T-cell (primary cell): ENCODE measurements at regions of chr5 and their contacts with region 1.

Region 1: DNA sequence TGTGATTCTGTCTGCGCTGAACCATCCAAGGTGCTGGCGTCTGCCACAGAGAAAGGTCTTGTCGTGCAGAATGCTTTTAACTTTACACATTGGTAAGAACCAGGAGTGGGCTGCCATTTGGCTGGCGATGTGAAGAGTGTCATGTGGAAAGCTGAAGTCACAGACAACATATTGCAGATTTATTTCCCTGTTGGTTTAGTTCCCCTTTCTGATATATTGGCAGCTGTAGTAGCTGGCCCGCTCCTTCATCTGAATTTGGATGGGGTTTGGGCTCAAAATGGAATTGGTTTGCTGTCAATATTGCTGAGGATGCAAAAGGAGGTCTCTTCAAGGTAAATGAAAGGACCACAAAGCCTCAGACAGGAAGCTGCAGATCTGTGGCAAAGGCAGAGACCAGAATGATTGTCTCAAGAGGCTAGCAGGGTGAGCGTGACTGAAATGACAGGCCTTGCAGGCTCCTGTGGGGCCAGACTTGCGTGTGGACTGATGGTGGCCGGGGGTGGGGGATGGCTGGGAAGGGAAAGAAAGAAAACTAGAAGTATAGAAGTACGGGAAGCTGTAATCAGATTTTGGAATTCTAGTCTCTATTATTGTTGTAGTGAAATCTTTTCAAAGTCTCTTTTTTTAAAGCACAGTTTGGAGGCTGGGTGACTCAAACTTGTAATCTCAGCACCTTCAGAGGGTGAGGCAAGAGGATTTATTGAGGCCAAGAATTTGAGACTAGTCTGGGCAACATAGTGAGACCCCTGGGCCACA is 25.1 kb upstream of the CD180 start:
- DNase-seq: peak in 24 of 35 experiments; percentile 8 to 69 (median 28)
- ATAC-seq: peak; percentile 93 to 96 (median 94)
- H3K4me3 ChIP-seq: no peak overlapping the region
- H3K4me3 Mint-ChIP-seq: peak overlapping the region; percentile 42 to 74 (median 54)
- H3K27ac ChIP-seq: peak overlapping the region; percentile 70
- H3K27ac Mint-ChIP-seq: peak overlapping the region; percentile 94 to 95
- H3K4me1 ChIP-seq: peaks cover 21 to 35% of the 10 kb centered on the region in 2 experiments
- H3K4me1 Mint-ChIP-seq: peaks cover 58 to 74% (median 70%) of the 10 kb centered on the region in 3 donors
- H3K27me3 ChIP-seq: no peaks in the 10 kb centered on the region
- H3K27me3 Mint-ChIP-seq: no peaks in the 10 kb centered on the region

Region 2: DNA sequence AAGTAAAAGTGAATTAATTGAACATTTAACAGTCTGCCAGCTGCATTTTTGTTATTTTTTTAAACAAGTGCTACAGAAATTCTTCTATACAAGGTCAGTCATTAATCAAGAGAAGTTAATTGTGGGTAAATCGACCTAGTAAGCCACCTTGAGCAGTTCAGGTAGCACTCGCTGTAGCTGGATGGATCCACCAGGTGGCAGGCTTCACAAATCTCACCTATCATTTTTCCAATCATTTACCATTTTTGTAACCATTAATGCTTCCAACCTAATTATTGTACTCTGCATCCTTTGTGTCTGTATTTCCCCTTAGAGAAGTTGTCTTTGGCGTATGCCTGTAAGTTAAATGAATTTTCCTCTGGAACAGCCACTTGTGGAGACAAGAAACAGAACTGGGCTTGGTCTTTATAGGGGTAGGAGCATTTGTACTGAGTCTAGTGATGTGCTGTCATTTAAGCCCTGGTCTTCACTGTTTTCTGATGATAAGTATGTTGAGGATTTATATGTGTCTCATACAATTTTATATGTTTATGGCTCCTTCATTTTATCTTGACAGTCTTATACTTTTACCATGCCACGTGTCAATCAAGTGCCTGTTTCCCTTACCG is 64.6 kb before region 1 on chr5:
- CTCF ChIA-PET with region 1: interaction called in 1 of 2 experiments, 12 read pairs
- POLR2A ChIA-PET with region 1: no interaction called
- DNase-seq: peak in 32 of 35 experiments; percentile 13 to 78 (median 47)
- ATAC-seq: peak in 3 of 4 experiments; percentile 33 to 61 (median 44)
- H3K4me3 ChIP-seq: no peak overlapping the region
- H3K4me3 Mint-ChIP-seq: peak overlapping the region in 1 of 3 donors; percentile 67
- H3K27ac ChIP-seq: peak overlapping the region; percentile 12
- H3K27ac Mint-ChIP-seq: peak overlapping the region; percentile 84 to 87
- H3K4me1 ChIP-seq: peaks cover 28 to 30% of the 10 kb centered on the region in 2 experiments
- H3K4me1 Mint-ChIP-seq: peaks cover 52 to 58% (median 54%) of the 10 kb centered on the region in 3 donors
- H3K27me3 ChIP-seq: no peaks in the 10 kb centered on the region
- H3K27me3 Mint-ChIP-seq: no peaks in the 10 kb centered on the region

Region 3: GRCh38 chr5:67196537-67197059 is 25.1 kb before region 1 on chr5 and contains the start of gene CD180:
- CTCF ChIA-PET with region 1: no interaction called
- POLR2A ChIA-PET with region 1: no interaction called
- DNase-seq: no peak
- ATAC-seq: no peak
- H3K4me3 ChIP-seq: no peak within 1 kb of the TSS
- H3K4me3 Mint-ChIP-seq: peak within 1 kb of the TSS in 1 of 3 donors; percentile 61
- H3K27ac ChIP-seq: no peak within 1 kb of the TSS
- H3K27ac Mint-ChIP-seq: peak within 1 kb of the TSS in 1 of 2 donors; percentile 57
- H3K4me1 ChIP-seq: peaks cover 4 to 7% of the 10 kb centered on the region in 2 experiments
- H3K4me1 Mint-ChIP-seq: peaks cover 26 to 74% (median 61%) of the 10 kb centered on the region in 3 donors
- H3K27me3 ChIP-seq: no peaks in the 10 kb centered on the region
- H3K27me3 Mint-ChIP-seq: no peaks in the 10 kb centered on the region
- total RNA-seq, gene CD180: 0.16 to 1.3 (median 0.73) TPM